Activated naive CD4-positive, alpha-beta T cell treated with anti-CD3 and anti-CD28 coated beads for 36 hours (primary cell): ENCODE measurements at regions of chr17 and their contacts with region 1.

Region 1: DNA sequence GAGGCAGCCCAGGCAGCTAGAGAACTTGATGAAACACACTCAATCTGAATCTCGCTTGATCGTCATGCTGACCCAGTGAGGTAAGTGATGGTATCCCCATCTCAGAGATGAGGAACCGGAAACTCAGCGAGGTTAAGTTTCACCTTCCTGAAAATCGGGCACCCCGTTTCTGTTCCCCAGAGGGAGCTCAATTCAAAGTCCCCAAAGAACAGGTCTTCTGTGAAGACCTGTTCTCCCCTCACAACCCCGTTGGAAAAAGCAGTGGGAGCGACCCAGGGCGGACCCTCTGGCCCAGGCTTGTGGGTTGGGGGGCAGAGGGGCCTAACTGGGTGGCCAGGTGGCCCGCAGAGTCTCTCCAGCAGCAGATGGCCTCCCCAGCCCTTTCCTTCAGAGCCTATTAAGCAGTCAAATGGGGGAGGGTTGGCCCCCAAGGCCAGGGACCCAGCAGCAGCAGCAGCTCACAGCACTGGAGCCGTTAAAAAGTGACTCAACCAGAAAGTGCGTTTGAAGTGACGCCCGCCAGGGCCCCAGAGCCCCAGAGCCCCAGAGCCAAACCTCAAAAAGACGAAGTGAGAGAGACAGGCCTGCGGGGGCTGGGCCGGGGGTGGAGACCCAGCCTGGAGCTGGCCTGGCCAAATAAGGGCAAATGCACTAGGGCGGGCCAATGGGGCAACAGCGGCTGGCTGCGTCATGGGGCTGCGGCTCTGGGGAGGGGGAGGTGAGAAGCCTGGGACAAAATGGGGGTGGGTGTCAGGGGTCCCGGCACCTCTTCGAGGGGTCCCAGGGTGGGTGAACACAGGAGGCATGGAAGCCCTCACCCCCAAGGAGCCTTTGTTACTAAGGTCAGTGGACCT is 9.2 kb upstream of the TSPOAP1 start:
- DNase-seq: peak; percentile 98
- H3K4me3 Mint-ChIP-seq: peak overlapping the region; percentile 92
- H3K27ac Mint-ChIP-seq: peak overlapping the region; percentile 99
- H3K4me1 Mint-ChIP-seq: peaks cover 7% of the 10 kb centered on the region
- H3K27me3 Mint-ChIP-seq: no peaks in the 10 kb centered on the region

Region 2: GRCh38 chr17:57463103-57463851 is 874.5 kb before region 1 on chr17:
- CTCF ChIA-PET with region 1: no interaction called
- intact Hi-C with region 1: loop called (anchors 10 kb)
- DNase-seq: peak; percentile 94
- H3K4me3 Mint-ChIP-seq: peak overlapping the region; percentile 8
- H3K27ac Mint-ChIP-seq: peak overlapping the region; percentile 73
- H3K4me1 Mint-ChIP-seq: peaks cover 59% of the 10 kb centered on the region
- H3K27me3 Mint-ChIP-seq: no peaks in the 10 kb centered on the region

Region 3: GRCh38 chr17:57970706-57971105 is 367.1 kb before region 1 on chr17:
- CTCF ChIA-PET with region 1: no interaction called
- intact Hi-C with region 1: no loop called
- DNase-seq: no peak
- H3K4me3 Mint-ChIP-seq: no peak overlapping the region
- H3K27ac Mint-ChIP-seq: no peak overlapping the region
- H3K4me1 Mint-ChIP-seq: no peaks in the 10 kb centered on the region
- H3K27me3 Mint-ChIP-seq: no peaks in the 10 kb centered on the region

Region 4: DNA sequence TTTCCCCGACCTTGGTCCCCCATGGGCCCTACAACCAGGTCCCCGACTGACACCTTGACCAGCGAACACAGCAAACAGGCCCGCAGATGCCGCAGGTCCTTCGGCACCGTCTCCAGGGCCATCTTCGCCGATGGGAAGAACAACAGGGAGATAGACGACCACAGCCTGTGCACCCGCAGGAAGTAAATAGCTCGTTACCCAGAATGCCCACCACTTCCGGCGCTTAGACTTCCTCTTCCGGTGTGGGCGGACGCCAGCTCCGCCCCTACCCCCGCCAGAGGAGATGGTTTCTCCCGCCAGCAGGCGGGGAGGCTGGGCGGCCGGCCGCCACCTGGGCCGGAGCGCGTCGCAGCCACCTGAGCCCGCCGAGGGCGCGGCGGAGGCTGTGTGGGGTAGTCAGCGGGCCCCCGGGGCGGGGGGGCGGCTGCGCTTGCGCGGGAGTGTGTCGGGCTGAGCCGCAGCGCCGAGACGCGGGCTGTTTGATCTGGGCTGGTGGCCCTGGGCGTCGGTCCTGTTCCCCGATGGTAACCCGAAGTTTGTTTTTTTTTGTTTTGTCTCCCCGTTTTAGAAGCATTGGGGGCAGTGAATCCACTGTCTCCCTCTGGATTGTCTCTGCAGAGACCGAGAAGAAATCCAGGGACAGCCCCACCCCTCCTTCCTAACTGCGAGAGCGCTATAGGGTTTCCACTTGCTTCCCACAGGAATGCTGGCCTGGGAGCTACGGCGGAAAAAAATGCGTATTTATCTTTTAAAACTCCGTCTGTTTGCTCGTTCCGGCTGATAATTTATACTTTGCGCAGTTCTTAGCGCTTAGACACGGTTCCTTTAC is 14.4 kb after region 1 on chr17 and contains the start of gene SUPT4H1:
- CTCF ChIA-PET with region 1: interaction called, 12 read pairs
- intact Hi-C with region 1: loop called (anchors 1 kb)
- DNase-seq: peak; percentile 92
- H3K4me3 Mint-ChIP-seq: peak within 1 kb of the TSS; percentile 100
- H3K27ac Mint-ChIP-seq: peak within 1 kb of the TSS; percentile 97
- H3K4me1 Mint-ChIP-seq: peaks cover 47% of the 10 kb centered on the region
- H3K27me3 Mint-ChIP-seq: no peaks in the 10 kb centered on the region
- total RNA-seq, gene SUPT4H1: 76.6 to 76.9 TPM

Region 5: DNA sequence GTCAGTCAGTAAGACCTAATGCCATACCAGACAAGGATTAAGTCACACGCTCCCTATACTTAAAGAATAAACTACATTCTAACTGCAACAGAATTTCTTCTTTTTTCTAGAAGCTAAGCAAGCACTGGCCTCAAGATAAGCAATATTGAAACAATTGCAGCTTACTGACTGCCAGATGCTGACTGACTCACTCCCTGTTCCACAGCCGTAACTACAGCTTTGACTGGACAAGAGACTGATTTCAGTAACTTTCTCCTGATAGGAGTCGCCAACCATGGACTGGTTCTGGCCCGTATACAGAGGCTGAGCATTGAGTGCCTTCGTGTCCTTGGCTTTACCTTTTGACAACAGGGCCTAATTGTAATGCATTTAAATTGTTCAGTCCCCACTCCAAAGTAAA is 700.9 kb after region 1 on chr17:
- CTCF ChIA-PET with region 1: no interaction called
- intact Hi-C with region 1: no loop called
- DNase-seq: peak; percentile 53
- H3K4me3 Mint-ChIP-seq: no peak overlapping the region
- H3K27ac Mint-ChIP-seq: no peak overlapping the region
- H3K4me1 Mint-ChIP-seq: peaks cover 5% of the 10 kb centered on the region
- H3K27me3 Mint-ChIP-seq: no peaks in the 10 kb centered on the region

Region 6: DNA sequence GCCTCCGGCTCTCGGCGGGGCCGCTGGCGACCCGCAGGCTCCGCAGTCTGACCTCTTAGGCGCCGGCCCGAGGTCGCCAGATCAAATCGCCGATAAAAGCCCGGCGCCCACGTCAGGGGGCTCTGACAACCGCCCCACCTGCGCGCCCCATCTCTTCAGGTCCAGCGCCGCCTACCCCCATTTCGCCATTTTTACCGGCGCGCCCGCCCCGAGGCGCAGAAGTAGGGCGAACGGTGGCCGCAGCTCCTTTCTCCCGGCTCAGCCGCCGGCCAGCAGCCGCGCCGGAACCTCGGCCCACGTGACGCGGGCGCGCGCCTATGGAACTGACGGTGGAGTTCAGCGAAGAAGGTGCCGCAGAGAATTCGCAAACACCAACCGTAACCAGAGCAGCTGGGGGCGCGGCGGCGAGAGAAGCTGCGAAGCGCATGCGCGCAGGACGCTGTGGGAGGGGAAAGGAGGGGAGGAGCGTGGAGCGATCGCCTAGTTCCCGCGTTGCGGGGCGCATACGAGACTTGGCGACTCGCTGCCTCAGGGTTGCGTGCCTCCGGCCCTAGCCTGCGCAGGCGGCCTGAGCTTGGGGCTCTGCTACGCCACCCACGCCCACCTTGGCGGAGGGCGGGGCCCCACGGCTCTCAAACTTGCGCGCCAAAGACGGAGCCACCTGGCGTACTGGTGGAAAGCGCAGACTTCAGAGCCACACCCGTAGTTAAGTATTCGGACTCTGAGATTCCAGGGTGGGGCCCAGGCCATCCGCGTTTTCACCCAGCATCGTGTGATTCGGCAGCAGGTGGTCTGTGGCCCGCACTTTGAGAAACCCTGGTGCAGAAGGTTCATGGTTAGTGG is 768.9 kb after region 1 on chr17 and contains the start of gene TRIM37:
- CTCF ChIA-PET with region 1: no interaction called
- intact Hi-C with region 1: loop called (anchors 5 kb)
- DNase-seq: peak; percentile 99
- H3K4me3 Mint-ChIP-seq: peak within 1 kb of the TSS; percentile 96
- H3K27ac Mint-ChIP-seq: peak within 1 kb of the TSS; percentile 89
- H3K4me1 Mint-ChIP-seq: peaks cover 54% of the 10 kb centered on the region
- H3K27me3 Mint-ChIP-seq: no peaks in the 10 kb centered on the region
- total RNA-seq, gene TRIM37: 19.9 to 24.1 TPM